Heart left ventricle (tissue), 16 donors: ENCODE measurements at regions of chr15 and their contacts with region 1.

Region 1: DNA sequence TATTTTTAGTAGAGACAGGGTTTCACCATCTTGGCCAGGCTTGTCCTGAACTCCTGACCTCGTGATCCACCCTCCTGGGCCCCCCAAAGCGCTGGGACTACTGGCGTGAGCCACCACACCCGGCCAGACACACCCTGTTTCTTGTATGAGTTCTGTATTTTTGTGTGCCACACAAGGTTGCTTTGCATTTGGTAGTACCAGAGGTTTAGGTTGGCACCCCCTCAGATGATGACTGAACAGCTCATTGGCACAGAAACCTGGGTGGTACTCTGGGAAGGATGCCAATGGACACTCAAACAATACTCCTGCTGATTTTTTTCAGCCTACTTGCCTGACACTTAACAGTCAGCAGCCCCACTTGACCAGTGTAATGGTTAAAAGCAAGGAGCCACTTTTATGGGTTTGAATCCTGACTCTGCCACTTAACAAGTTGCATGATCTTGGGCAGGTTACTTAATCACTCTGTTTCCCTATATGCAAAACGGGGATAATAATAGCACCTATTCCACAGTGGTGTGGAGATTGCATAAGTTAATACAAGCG is 39.2 kb upstream of the BCL2A1 start:
- DNase-seq: no peak
- ATAC-seq: no peak
- H3K4me3 ChIP-seq: no peak overlapping the region
- H3K27ac ChIP-seq: no peak overlapping the region
- H3K4me1 ChIP-seq: no peaks in the 10 kb centered on the region
- H3K27me3 ChIP-seq: no peaks in the 10 kb centered on the region
- CTCF ChIP-seq: no peak
- POLR2A ChIP-seq: no peak

Region 2: DNA sequence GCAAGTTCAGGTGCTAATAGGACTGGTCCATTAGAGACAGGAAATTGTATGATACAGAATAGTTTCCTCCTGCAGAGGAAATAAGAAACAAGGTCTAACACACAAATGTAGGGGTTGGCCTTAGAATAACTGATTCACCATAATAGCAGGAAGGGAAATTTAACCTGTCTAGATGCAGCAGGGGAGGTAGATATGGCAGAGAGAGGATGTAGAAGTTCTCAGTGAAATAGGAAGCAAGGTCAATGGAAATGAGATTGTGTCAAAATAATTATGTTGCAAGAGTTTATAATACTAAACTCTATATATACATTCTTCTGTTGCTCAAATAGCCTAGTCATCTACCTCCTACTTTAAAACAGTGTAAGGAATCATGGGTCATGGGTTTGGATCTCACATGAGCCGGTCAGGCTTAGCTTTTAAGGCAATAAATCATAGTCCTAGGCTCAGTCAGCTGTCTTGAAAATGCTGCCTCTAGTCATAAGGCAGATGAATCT is 56.2 kb before region 1 on chr15:
- intact Hi-C with region 1: loop called in 1 of 10 experiments (anchors 10 kb)
- DNase-seq: no peak
- ATAC-seq: no peak
- H3K4me3 ChIP-seq: no peak overlapping the region
- H3K27ac ChIP-seq: peak overlapping the region in 1 of 12 donors; percentile 73
- H3K4me1 ChIP-seq: peaks cover 0 to 33% (median 0%) of the 10 kb centered on the region in 12 donors
- H3K27me3 ChIP-seq: no peaks in the 10 kb centered on the region
- CTCF ChIP-seq: no peak
- POLR2A ChIP-seq: no peak